Common myeloid progenitor, CD34-positive (primary cell): ENCODE measurements at regions of chr9 and their contacts with region 1.

Region 1: GRCh38 chr9:136441191-136441680 is 1.6 kb upstream of the INPP5E start:
- DNase-seq: no peak
- H3K4me3 ChIP-seq: no peak overlapping the region
- H3K27ac ChIP-seq: no peak overlapping the region
- H3K4me1 ChIP-seq: peaks cover 0 to 26% (median 22%) of the 10 kb centered on the region in 4 experiments
- H3K27me3 ChIP-seq: no peaks in the 10 kb centered on the region

Region 2: DNA sequence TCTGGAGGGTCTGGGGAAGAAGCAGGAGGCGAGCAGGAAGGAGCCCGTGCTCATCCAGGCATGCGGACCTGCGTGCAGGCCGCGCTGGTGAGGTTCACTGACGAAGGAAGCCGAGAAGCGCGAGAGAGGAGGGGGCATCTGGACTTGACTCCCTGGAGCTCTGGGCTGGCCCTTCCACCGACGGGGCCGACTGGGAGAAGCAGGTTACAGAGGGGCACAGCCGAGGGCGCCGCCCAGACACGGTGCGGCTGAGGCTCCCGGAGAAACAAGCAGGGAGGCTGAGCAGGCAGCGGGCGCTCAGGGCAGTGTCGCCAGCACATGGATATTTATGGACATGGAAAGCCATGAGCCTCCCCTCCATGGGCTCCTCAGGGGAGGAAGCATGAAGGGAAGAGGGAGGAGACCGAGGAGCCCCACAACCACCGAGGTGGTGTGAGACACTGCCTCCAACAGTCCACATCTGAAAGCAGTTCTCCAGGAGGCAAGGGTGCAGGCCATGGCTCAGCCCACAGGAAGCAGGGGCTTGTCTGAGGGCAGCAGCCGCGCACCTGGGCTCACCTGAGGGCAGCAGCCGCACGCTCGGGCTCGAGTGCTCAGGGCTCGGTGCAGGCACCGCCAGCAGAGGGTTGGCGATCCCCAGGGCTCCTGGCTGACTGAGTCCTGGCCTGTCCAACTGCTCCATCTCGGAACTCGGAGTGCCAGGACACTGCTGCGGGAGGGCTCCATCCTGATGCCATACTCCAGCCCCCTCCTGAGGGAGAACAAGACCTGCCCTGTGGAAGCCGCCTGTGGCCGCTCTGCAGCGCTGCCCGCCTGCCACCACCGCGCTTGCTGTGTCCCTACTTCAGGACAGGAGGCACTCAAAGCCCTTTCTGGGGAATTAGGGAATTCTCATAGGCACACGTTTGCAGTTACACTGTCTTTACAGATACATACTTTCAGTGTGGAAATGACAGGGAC is 14.1 kb after region 1 on chr9:
- CTCF ChIA-PET with region 1: interaction called, 13 read pairs
- POLR2A ChIA-PET with region 1: interaction called, 3 read pairs
- DNase-seq: no peak
- H3K4me3 ChIP-seq: no peak overlapping the region
- H3K27ac ChIP-seq: no peak overlapping the region
- H3K4me1 ChIP-seq: no peaks in the 10 kb centered on the region
- H3K27me3 ChIP-seq: no peaks in the 10 kb centered on the region

Region 3: GRCh38 chr9:136489731-136490130 is 48.5 kb after region 1 on chr9:
- CTCF ChIA-PET with region 1: no interaction called
- POLR2A ChIA-PET with region 1: no interaction called
- DNase-seq: no peak
- H3K4me3 ChIP-seq: no peak overlapping the region
- H3K27ac ChIP-seq: no peak overlapping the region
- H3K4me1 ChIP-seq: peaks cover 0 to 22% (median 10%) of the 10 kb centered on the region in 4 experiments
- H3K27me3 ChIP-seq: no peaks in the 10 kb centered on the region

Region 4: DNA sequence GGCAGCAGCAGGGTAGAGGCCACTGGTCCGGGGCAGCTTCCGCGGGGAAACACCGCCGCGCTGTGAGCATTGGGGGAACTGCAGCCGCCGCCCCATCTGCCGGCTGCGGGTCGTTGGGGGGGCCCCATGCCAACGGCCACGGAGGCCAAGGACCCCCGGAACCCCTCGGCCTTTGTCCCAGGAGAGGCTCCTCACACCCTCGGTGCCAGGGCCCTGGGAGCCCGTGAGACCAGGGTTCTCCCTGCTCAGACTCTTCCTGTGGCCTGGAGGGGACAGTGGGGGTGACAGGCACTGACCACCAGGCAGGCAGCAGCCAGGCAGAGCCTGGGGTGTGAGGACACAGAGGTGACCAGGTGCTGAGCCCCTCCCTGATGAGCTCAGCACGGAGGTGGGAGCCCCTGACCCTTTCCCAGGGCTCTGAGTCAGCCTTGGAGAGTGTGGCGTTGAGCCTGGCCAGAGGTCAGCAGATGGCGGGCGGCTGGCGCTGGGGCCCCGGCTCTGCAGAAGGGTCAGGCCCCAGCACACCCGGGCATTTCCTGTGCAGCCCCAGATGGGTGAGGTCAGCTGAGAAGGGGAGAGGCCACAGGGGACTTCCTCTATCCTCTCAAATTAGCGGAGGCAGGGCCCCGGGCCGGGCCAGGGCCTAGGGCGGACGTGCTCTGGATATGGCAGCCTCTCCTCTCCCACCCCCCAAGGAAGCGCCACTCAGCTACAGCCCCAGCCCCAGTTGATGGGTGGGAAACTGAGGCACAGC is 203.5 kb after region 1 on chr9:
- CTCF ChIA-PET with region 1: no interaction called
- POLR2A ChIA-PET with region 1: no interaction called
- DNase-seq: peak in 2 of 3 donors; percentile 70 to 78
- H3K4me3 ChIP-seq: peak overlapping the region in 5 of 7 experiments; percentile 19 to 65 (median 57)
- H3K27ac ChIP-seq: peak overlapping the region; percentile 40 to 82
- H3K4me1 ChIP-seq: peaks cover 3 to 72% (median 67%) of the 10 kb centered on the region in 4 experiments
- H3K27me3 ChIP-seq: no peaks in the 10 kb centered on the region

Region 5: GRCh38 chr9:136742591-136743391 is 301.6 kb after region 1 on chr9 and contains the start of gene LCN10:
- CTCF ChIA-PET with region 1: no interaction called
- POLR2A ChIA-PET with region 1: no interaction called
- DNase-seq: no peak
- H3K4me3 ChIP-seq: peak within 1 kb of the TSS in 5 of 7 experiments; percentile 1 to 59 (median 36)
- H3K27ac ChIP-seq: no peak within 1 kb of the TSS
- H3K4me1 ChIP-seq: peaks cover 0 to 46% (median 33%) of the 10 kb centered on the region in 4 experiments
- H3K27me3 ChIP-seq: peaks cover 0 to 2% (median 0%) of the 10 kb centered on the region in 5 experiments